ENCODE measurements at regions of chr9 and their contacts with region 1.

Region 1: DNA sequence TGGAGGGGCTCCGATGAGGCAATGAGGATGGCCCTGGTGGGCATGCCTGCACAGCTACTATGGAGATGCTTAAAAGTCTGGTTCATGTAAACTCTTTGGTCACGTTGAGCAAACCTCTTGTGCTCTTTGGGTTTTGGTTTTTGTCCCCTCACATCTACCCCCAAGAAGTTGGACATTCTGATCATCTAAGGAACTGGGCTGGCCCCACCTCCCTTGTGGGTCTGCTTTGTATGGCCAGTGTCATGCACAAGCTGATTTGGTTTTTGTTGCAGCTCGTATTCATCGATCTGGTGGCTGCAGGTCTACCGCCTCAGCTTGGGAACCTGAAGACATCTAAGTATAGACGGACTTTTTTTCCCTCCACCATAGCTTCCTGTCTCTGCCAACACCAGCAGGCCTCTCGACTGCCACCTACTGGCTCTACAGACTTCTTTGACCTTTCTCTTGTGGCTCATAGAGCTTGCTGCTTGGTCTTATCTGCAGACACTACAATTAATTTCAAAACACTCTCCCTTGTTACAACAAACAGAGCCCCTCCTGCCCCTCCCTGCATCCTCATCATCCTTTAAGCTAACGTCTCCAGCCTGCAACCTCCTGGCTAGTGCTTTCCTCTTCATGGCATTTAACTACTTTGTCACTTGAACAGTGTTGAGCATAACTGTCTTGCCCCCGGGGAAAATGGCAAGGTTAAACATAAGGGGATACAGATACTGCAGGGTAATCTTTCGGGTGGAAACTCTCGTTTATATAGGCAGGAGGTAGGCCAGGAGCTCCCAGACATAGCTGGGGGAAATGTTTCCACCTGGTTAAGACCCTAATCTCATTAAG is 34.5 kb downstream of the TSTD2 start:
- H3K4me3 ChIP-seq: no peak overlapping the region
- H3K27ac ChIP-seq: no peak overlapping the region
- H3K4me1 ChIP-seq: no peaks in the 10 kb centered on the region
- CTCF ChIP-seq: peak; percentile 68; the same call in 1 of the 2 replicates

Region 2: GRCh38 chr9:96854073-96854876 is 744.4 kb before region 1 on chr9 and contains the start of gene ZNF782:
- CTCF ChIA-PET with region 1: interaction called, 13 read pairs
- POLR2A ChIA-PET with region 1: no interaction called
- H3K4me3 ChIP-seq: peak within 1 kb of the TSS; percentile 84
- H3K27ac ChIP-seq: peak within 1 kb of the TSS; percentile 53; the same call in 1 of the 2 replicates
- H3K4me1 ChIP-seq: no peaks in the 10 kb centered on the region
- CTCF ChIP-seq: 0 out of 2 replicates have a peak, but pooled peaks have one; percentile 16

Region 3: DNA sequence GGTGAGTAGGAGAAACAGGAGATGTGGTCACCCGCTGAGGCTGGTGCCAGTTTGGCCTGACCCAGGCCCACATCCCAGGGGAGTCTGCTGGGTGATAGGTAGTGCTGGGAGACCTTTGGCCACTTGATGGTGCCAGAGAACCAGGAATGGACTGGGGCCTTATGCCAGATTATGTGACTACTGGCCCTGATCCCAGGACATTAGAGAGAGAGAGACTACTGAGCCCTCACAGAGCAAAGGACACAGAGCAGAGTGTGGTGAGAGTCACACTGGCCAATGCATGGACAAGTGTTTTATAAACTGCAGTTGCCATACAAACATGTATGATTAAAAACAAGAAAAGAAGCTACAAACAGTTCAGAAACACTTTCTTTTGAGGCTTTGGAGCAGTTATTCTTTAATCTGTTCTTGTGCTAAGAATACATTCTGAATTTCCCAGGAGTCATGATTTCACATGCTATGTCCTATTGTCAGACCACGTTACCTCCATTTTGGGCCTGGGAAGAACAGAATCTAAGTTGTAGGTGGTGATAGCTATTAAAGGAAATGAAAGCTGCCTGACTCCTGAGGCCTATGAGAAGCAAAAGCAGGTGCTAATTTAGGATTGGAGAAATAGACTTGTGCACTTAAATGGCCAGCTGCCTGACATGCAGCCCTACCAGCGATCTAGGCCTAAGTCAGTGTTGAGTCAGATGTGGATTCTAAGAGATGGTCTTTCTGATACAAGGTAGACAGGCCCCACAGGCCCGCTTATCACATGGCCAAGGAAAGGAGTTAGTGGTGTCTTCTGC is 129.8 kb before region 1 on chr9:
- CTCF ChIA-PET with region 1: interaction called, 188 read pairs
- POLR2A ChIA-PET with region 1: interaction called, 5 read pairs
- H3K4me3 ChIP-seq: no peak overlapping the region
- H3K27ac ChIP-seq: no peak overlapping the region
- H3K4me1 ChIP-seq: no peaks in the 10 kb centered on the region
- CTCF ChIP-seq: peak; percentile 70

Region 4: GRCh38 chr9:97487107-97487506 is 111.6 kb before region 1 on chr9:
- CTCF ChIA-PET with region 1: interaction called, 34 read pairs
- POLR2A ChIA-PET with region 1: no interaction called
- H3K4me3 ChIP-seq: no peak overlapping the region
- H3K27ac ChIP-seq: no peak overlapping the region
- H3K4me1 ChIP-seq: no peaks in the 10 kb centered on the region
- CTCF ChIP-seq: no peak

Region 5: DNA sequence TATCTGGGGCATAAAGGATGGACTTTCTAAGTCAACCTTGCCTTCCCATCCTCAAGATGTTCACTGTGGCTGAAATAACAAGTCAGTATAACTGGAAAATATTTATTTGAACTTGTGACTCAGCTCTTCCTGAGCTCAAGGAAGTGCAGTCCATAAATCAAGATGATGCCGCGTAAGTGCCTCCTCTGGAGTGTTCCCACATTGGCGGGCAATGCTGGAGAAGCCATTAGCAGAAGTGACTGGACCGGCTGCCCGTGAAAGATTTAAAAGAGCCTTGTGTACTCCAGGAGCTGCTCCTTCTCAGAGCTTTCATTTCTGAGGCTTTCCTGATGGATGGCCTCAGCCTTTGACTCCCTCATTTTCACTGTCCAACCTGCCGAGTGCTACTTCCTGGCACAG is 79.8 kb before region 1 on chr9:
- CTCF ChIA-PET with region 1: interaction called, 12 read pairs
- POLR2A ChIA-PET with region 1: no interaction called
- H3K4me3 ChIP-seq: no peak overlapping the region
- H3K27ac ChIP-seq: no peak overlapping the region
- H3K4me1 ChIP-seq: peaks cover under 1% of the 10 kb centered on the region; the same call in 1 of the 2 replicates
- CTCF ChIP-seq: no peak

Region 6: GRCh38 chr9:97615439-97616072 is 16.9 kb after region 1 on chr9:
- CTCF ChIA-PET with region 1: interaction called, 102 read pairs
- POLR2A ChIA-PET with region 1: interaction called, 7 read pairs
- H3K4me3 ChIP-seq: no peak overlapping the region
- H3K27ac ChIP-seq: no peak overlapping the region
- H3K4me1 ChIP-seq: no peaks in the 10 kb centered on the region
- CTCF ChIP-seq: 0 out of 2 replicates have a peak, but pooled peaks have one; percentile 43

Region 7: DNA sequence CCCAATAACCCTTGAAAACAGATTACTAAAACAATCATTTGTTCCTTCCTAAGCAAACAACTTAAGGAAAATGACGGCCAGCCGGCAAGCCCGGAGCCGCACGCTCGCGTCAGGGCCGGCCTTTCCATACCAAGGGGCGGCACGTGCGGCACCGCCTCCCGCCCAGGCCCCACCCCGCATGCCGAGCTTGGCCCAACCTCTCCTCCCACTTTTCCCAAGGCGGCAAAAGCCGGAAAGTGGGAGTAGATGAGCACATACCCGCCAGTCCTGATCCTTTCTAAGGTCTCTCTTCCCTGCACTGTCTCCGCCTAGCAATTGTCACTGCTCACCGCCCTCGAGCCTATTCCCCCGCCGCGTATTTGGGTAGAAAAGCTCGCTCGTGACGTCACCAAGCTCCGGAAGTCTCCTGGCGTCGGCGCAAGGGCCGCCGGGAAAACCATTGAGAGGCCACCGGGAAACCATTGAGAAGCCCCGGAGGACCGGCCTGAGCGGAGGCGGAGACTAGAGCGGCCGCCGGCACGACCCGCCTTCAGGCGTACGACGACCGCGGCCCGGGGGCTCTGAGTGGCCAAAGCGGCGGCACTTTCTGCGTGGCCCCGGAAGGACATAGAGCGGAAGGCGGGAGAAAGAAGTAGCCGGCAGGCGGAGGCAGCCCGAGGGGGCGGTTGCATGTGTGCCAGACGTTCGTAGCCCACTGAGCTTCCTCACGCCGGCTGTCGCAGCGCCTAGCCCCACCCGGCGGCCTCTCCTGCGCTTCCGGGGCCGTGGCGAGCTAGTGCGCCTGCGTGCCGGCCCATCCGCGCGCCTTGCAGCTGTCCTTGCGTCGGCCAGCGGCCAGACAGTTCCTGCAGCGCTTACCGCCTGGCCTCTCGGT is 34.5 kb after region 1 on chr9 and contains the starts of genes NCBP1 and TSTD2:
- CTCF ChIA-PET with region 1: interaction called, 14 read pairs
- POLR2A ChIA-PET with region 1: interaction called, 8 read pairs
- H3K4me3 ChIP-seq: peak within 1 kb of the TSS; percentile 97
- H3K27ac ChIP-seq: peak within 1 kb of the TSS; percentile 92
- H3K4me1 ChIP-seq: no peaks in the 10 kb centered on the region; the same call in 1 of the 2 replicates
- CTCF ChIP-seq: no peak; the same call in 1 of the 2 replicates

Region 8: DNA sequence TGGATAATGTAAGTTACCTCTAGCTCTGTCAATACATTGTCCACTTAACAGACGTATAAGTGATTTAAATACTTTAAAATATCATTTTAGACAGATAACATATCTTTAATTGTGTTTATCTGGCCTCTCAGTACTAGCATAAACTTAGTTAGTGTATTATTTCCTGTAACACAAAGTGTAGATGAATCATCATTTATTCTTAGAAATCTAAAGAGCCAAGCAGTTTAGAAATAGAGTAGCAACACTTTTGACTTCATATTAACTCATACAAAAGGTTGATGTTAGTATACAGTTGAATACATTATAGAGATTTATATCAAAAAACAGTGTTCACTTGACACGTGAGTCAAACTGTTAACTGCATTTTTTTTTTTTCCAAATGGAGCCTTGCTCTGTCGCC is 53.0 kb after region 1 on chr9:
- CTCF ChIA-PET with region 1: no interaction called
- POLR2A ChIA-PET with region 1: no interaction called
- H3K4me3 ChIP-seq: no peak overlapping the region
- H3K27ac ChIP-seq: no peak overlapping the region
- H3K4me1 ChIP-seq: no peaks in the 10 kb centered on the region
- CTCF ChIP-seq: no peak